Mammary epithelial cell (primary cell): ENCODE measurements at regions of chr9 and their contacts with region 1.

Region 1: GRCh38 chr9:79233542-79233941 is 338.2 kb upstream of the TLE4 start:
- DNase-seq: peak; percentile 46
- H3K4me3 ChIP-seq: no peak overlapping the region
- H3K27ac ChIP-seq: no peak overlapping the region
- H3K4me1 ChIP-seq: no peaks in the 10 kb centered on the region
- H3K27me3 ChIP-seq: no peaks in the 10 kb centered on the region
- CTCF ChIP-seq: peak; percentile 78 to 79

Region 2: DNA sequence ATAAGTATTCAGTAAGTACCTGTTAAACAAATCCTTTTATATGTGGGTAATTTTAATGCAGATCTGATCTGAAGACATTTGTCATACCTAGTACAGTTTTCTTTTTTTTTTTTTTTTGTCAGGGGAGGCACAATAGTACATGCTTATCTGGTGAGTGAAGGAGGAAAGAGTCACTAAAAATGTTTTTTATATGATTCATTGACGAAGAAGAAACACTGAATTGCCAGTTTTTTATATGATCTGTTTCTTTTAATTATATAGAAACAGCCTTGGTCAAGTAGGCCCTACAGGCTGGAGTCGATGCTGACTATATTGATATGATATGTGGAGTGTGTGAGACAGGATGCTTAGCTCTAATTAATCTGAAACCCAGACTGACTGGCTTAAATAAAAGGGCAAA is 621.5 kb before region 1 on chr9:
- CTCF ChIA-PET with region 1: no interaction called
- dilution Hi-C with region 1: no loop called
- in situ Hi-C with region 1: no loop called
- intact Hi-C with region 1: loop called (anchors 10 kb)
- DNase-seq: peak; percentile 45
- H3K4me3 ChIP-seq: no peak overlapping the region
- H3K27ac ChIP-seq: no peak overlapping the region
- H3K4me1 ChIP-seq: peaks cover 4% of the 10 kb centered on the region
- H3K27me3 ChIP-seq: no peaks in the 10 kb centered on the region
- CTCF ChIP-seq: no peak

Region 3: GRCh38 chr9:78820855-78821822 is 412.4 kb before region 1 on chr9:
- CTCF ChIA-PET with region 1: no interaction called
- dilution Hi-C with region 1: no loop called
- in situ Hi-C with region 1: loop called in 1 of 2 experiments (anchors 25 kb)
- intact Hi-C with region 1: loop called (anchors 2 kb)
- DNase-seq: peak; percentile 29
- H3K4me3 ChIP-seq: peak overlapping the region; percentile 19 to 30 (median 29)
- H3K27ac ChIP-seq: no peak overlapping the region
- H3K4me1 ChIP-seq: no peaks in the 10 kb centered on the region
- H3K27me3 ChIP-seq: no peaks in the 10 kb centered on the region
- CTCF ChIP-seq: peak; percentile 73 to 74

Region 4: DNA sequence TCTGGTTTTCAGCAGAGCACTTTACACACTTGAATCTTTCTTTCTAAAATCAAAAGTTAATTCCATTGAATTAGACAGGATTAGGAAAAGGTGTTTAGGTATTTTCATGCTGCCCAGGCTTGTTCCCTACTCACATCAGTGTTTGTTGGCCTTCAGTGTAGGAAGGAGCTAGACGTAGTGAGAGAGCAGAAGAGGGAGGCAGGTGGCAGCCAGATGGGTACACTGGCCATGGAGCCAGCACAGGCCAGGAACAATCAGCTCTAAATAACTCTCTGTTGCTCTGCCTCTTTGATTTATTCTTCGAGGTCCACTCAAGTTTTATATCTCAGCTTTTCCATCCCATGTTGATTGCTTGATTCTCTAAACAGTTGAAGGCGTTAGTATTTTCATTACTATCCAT is 407.0 kb before region 1 on chr9:
- CTCF ChIA-PET with region 1: no interaction called
- dilution Hi-C with region 1: no loop called
- in situ Hi-C with region 1: loop called in 1 of 2 experiments (anchors 25 kb)
- intact Hi-C with region 1: loop called (anchors 2 kb)
- DNase-seq: no peak
- H3K4me3 ChIP-seq: no peak overlapping the region
- H3K27ac ChIP-seq: no peak overlapping the region
- H3K4me1 ChIP-seq: no peaks in the 10 kb centered on the region
- H3K27me3 ChIP-seq: no peaks in the 10 kb centered on the region
- CTCF ChIP-seq: no peak

Region 5: GRCh38 chr9:79155308-79155707 is 78.2 kb before region 1 on chr9:
- CTCF ChIA-PET with region 1: no interaction called
- dilution Hi-C with region 1: no loop called
- in situ Hi-C with region 1: no loop called
- intact Hi-C with region 1: loop called (anchors 1 kb)
- DNase-seq: peak; percentile 45
- H3K4me3 ChIP-seq: no peak overlapping the region
- H3K27ac ChIP-seq: no peak overlapping the region
- H3K4me1 ChIP-seq: no peaks in the 10 kb centered on the region
- H3K27me3 ChIP-seq: no peaks in the 10 kb centered on the region
- CTCF ChIP-seq: peak; percentile 18 to 47